ENCODE measurements at regions of chr21 and their contacts with region 1.

Region 1: GRCh38 chr21:15729674-15730483 is at the start of gene USP25:
- DNase-seq: peak; percentile 77
- H3K4me3 Mint-ChIP-seq: peak within 1 kb of the TSS; percentile 91
- H3K27ac Mint-ChIP-seq: peak within 1 kb of the TSS; percentile 83
- H3K4me1 Mint-ChIP-seq: peaks cover 24% of the 10 kb centered on the region
- H3K27me3 Mint-ChIP-seq: peaks cover 2% of the 10 kb centered on the region
- total RNA-seq, gene USP25: 24.7 to 27.8 TPM

Region 2: DNA sequence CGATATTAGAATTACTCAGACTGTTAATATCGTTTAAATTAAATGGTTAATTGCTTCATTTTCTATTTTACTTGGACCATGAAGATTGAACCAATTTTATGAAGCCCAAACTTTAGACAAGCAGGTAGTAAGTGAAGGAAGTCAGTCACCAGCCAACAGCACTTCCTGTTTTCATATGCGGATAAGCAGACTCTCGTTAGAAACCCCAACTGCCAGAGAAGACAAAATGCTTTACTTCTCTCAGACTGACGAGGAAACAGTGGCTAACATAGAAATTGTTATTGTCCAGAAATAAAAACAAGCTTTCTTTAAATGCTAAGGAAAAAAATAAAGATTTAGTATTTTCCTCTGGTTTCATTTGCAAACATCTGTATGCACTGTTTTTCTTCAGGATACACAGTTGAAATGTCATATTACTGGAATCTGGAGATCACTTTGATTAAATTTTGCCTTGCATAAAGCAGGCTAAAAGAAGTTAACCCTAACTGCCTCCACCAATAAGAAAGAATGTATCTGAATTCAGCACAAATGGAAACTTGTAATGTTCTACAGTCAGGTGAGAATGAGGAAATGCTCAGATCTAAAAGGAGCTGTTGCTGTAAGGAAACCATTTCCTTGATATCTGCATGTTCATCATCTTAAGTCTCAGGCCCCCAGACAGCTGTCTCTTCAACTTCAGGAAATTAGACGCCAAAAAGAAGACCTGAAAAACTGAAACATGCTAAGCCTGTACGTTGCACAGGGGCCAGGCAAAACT is 1053.9 kb before region 1 on chr21:
- CTCF ChIA-PET with region 1: no interaction called
- intact Hi-C with region 1: loop called (anchors 5 kb)
- DNase-seq: peak; percentile 28
- H3K4me3 Mint-ChIP-seq: peak overlapping the region; percentile 63
- H3K27ac Mint-ChIP-seq: peak overlapping the region; percentile 91
- H3K4me1 Mint-ChIP-seq: peaks cover 40% of the 10 kb centered on the region
- H3K27me3 Mint-ChIP-seq: no peaks in the 10 kb centered on the region

Region 3: GRCh38 chr21:15422783-15423182 is 307.1 kb before region 1 on chr21:
- CTCF ChIA-PET with region 1: no interaction called
- intact Hi-C with region 1: loop called (anchors 5 kb)
- DNase-seq: peak; percentile 12
- H3K4me3 Mint-ChIP-seq: no peak overlapping the region
- H3K27ac Mint-ChIP-seq: peak overlapping the region; percentile 14
- H3K4me1 Mint-ChIP-seq: peaks cover 39% of the 10 kb centered on the region
- H3K27me3 Mint-ChIP-seq: peaks cover 5% of the 10 kb centered on the region

Region 4: DNA sequence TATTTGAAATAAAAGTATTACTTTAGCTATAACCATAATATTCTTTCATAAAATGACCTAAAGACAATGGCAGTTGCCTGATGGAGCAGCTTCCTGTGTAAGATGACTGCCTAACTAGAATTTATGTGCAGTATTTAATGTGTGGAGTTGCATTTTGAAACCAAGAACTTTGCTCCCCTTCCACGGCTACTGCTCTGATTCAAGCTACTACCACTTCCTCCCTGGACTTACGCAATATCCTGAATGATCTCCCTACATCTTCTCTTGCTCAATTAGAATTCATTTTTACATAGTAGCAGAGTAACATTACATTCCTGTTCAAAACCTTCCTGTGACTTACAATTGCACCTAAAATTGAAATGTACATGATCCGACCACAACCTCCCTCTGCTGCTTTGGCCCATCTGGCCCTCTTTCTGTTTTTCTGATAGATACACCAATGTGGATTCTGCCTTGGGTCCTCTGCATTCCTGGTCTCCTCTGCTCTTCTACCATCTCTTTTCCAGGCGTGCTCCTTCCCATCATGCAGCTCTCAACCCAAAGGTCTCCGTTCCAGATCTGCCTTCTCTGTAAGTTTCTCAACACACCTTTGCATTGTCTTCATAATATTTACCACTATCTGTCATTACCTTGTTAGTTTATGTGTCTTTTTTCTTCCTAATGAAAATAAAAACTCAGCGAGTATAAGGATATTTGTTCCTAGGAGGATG is 47.5 kb before region 1 on chr21:
- CTCF ChIA-PET with region 1: no interaction called
- intact Hi-C with region 1: loop called (anchors 2 kb)
- DNase-seq: no peak
- H3K4me3 Mint-ChIP-seq: no peak overlapping the region
- H3K27ac Mint-ChIP-seq: no peak overlapping the region
- H3K4me1 Mint-ChIP-seq: peaks cover 10% of the 10 kb centered on the region
- H3K27me3 Mint-ChIP-seq: no peaks in the 10 kb centered on the region

Region 5: DNA sequence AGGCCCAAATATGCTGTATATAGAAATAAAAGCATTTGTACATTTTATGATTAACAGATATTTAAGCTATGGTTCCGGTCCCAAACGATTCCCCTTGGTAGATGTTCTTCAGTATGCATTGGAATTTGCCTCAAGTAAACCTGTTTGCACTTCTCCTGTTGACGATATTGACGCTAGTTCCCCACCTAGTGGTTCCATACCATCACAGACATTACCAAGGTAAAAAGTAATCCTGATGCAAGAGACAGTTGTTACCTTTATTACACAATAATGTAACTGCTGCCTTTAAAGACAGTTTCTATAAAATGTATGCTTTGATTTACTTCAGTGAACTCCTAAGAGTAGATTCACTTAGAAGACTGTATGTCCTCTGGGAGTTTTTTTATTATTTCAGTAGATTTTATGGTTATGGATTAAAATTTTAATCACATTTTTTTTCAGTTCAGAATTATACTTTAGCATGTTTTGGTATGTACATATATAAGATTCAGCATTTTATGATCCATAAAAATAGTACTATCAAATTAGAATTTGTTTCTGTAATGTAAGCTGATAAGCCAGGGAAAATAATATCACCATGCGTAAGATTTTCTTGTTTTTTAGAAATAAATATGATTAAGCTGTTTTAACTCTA is 96.4 kb after region 1 on chr21:
- CTCF ChIA-PET with region 1: no interaction called
- intact Hi-C with region 1: loop called (anchors 1 kb)
- DNase-seq: peak; percentile 53
- H3K4me3 Mint-ChIP-seq: no peak overlapping the region
- H3K27ac Mint-ChIP-seq: no peak overlapping the region
- H3K4me1 Mint-ChIP-seq: peaks cover 28% of the 10 kb centered on the region
- H3K27me3 Mint-ChIP-seq: no peaks in the 10 kb centered on the region